ENCODE measurements at regions of chr2 and their contacts with region 1.

Region 1: DNA sequence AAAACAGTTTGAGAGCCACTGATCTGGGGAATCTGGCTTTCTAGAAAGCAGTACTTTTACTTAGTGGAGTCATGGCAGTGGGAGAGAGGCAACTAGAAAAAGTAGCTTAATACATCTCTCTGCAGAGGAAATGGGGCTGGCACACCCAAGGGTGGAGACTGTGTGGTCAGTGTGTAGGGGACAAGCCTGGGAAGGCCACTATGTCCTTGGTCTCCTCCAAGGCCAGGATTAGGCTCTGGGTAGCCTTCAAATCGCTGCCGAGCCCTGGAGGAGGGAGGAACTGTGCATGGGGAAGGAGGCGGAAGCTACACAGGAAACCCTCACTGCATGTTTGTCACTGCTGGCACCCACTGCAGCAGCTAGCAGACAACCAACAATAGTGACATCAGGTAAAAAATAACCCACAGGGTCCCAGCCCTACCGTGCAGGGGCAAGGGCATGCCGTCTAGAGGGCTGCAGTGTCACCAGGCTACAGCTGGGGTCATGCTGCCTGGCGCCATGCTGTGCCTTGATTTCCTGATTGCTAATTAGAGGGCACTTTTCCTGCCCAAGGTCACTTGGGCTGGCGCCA is 34.8 kb downstream of the LBH start:
- DNase-seq: peak; percentile 73
- ATAC-seq: peak; percentile 57
- H3K4me3 Mint-ChIP-seq: peak overlapping the region; percentile 76
- H3K27ac Mint-ChIP-seq: peak overlapping the region; percentile 99
- H3K4me1 Mint-ChIP-seq: peaks cover 81% of the 10 kb centered on the region
- H3K27me3 Mint-ChIP-seq: no peaks in the 10 kb centered on the region
- CTCF ChIP-seq: no peak

Region 2: DNA sequence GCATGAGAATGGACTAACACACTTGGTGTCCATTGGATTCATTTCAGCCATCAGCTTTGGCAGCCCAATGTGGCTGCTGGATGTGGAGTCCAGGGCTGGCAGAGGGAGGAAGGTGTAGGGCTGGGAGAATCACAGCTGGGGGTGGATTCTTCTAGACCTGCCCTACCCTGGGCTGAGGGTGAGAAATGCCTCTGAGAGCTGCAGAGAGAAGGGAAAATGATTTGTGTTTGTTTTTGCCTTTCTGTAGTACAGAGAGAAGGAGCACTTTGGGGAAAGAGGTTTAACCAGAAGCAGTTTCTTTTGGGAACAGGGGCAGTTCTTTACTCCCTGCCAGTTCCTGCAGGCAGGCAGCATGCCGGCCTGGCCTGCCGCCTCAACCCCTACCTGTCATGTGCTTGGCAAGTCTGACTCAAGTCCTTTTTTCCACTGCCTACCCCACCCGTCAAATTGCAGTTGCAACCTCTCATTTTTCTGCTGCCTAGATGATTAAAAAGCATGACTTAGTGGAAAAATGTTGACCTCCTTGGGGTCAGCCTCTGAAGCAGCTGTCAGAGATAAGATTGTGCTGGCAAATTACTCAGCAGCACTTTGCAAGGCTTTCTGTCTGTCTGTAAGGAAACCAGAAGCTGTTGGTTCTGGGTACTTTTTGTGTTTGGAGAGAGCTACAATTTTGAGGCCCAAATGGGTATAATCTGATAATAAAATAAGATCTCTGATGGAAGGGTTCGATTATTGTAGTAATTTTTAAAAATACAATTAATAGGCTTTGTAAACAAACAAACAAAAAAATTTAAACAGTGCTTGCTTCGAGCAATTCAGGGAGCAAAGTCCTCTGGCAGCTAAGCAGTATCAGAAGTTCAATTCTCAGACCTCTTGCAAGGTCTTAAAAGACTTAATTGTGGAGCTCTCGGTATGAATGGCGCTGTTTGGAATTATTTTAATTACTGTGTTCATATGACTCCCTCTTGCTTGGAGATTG is 13.1 kb before region 1 on chr2:
- CTCF ChIA-PET with region 1: interaction called, 5 read pairs
- POLR2A ChIA-PET with region 1: interaction called, 42 read pairs
- intact Hi-C with region 1: no loop called
- DNase-seq: peak; percentile 88
- ATAC-seq: peak; percentile 67
- H3K4me3 Mint-ChIP-seq: peak overlapping the region; percentile 53
- H3K27ac Mint-ChIP-seq: peak overlapping the region; percentile 95
- H3K4me1 Mint-ChIP-seq: peaks cover 96% of the 10 kb centered on the region
- H3K27me3 Mint-ChIP-seq: peaks cover 2% of the 10 kb centered on the region
- CTCF ChIP-seq: no peak

Region 3: DNA sequence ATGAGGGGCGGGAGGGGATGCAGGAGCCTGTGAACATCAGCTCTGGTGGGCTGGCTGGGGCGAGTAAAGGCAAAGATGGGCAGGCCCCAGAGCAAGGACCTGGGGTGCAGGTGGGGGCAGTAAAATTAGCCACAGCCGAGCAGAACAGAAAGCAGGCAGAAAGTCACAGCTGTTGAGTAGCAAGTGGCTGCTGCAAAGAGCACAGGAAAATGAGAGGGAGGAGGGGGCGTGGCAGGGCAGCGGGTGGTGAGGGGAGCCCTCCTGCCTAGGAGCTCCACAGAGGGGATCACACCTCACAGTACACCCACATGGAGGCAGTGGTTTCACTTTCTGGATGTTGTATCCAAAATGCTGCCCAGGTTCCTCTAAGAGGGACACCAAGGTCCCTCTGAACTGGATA is 44.8 kb after region 1 on chr2:
- CTCF ChIA-PET with region 1: no interaction called
- POLR2A ChIA-PET with region 1: no interaction called
- intact Hi-C with region 1: no loop called
- DNase-seq: peak; percentile 69
- ATAC-seq: peak; percentile 46
- H3K4me3 Mint-ChIP-seq: no peak overlapping the region
- H3K27ac Mint-ChIP-seq: peak overlapping the region; percentile 40
- H3K4me1 Mint-ChIP-seq: peaks cover 50% of the 10 kb centered on the region
- H3K27me3 Mint-ChIP-seq: no peaks in the 10 kb centered on the region
- CTCF ChIP-seq: no peak

Region 4: DNA sequence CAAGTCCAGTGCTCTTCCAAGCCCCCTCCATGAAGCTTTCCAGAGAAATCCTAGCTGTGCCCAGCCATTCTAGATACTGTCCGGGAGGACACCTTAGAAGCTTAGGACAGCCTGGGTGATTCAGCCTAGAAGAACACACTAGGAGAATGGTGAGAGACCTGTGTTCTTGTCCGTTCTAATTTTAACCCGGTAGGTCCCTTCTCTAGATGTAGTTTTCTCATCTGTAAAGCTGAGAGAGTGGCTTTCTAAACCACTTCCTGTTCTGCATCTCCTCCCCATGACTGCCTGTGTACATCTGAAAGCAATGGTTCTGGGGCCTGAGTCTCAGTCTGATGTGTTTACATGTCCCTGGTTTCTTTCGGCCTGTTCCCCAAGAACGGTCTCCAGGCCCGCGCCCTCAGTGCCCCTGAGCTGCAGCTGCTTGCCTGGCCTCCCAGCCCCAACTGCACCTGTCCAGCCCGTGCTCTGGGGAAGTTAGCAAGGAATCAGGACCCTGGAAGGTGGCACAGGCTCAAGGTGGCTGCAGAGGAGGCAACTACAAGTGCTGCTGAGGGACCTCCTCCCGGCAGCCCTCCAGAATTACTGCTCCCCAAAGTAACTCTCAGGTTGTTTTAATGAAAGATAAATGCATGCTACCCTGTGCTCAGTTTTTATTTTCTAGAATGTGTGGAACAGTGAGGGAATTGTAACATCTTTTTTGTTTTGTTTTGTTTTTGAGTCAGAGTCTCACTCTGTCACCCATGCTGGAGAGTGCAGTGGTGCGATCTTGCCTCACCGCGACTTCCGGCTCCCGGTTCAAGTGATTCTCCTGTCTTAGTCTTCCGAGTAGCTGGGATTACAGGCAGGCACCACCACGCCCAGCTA is 71.1 kb after region 1 on chr2:
- CTCF ChIA-PET with region 1: interaction called, 3 read pairs
- POLR2A ChIA-PET with region 1: interaction called, 6 read pairs
- intact Hi-C with region 1: loop called (anchors 5 kb)
- DNase-seq: peak; percentile 67
- ATAC-seq: peak; percentile 76
- H3K4me3 Mint-ChIP-seq: peak overlapping the region; percentile 59
- H3K27ac Mint-ChIP-seq: peak overlapping the region; percentile 96
- H3K4me1 Mint-ChIP-seq: peaks cover 78% of the 10 kb centered on the region
- H3K27me3 Mint-ChIP-seq: no peaks in the 10 kb centered on the region
- CTCF ChIP-seq: no peak